IMR-90 (cell line): ENCODE measurements at regions of chr10 and their contacts with region 1.

Region 1: GRCh38 chr10:118423800-118424479 is 81.8 kb upstream of the FAM204A start:
- DNase-seq: peak; percentile 81
- ATAC-seq: peak; percentile 96
- H3K4me3 ChIP-seq: no peak overlapping the region
- H3K27ac ChIP-seq: no peak overlapping the region
- H3K4me1 ChIP-seq: no peaks in the 10 kb centered on the region
- H3K27me3 ChIP-seq: no peaks in the 10 kb centered on the region
- CTCF ChIP-seq: peak; percentile 78
- POLR2A ChIP-seq: no peak
- RAD21 ChIP-seq: peak; percentile 68

Region 2: GRCh38 chr10:118341791-118342637 is 81.9 kb before region 1 on chr10 and contains the start of gene FAM204A:
- CTCF ChIA-PET with region 1: no interaction called
- POLR2A ChIA-PET with region 1: no interaction called
- dilution Hi-C with region 1: no loop called
- in situ Hi-C with region 1: no loop called
- intact Hi-C with region 1: loop called (anchors 1 kb)
- DNase-seq: peak; percentile 90
- ATAC-seq: peak; percentile 99
- H3K4me3 ChIP-seq: peak within 1 kb of the TSS; percentile 90
- H3K27ac ChIP-seq: peak within 1 kb of the TSS; percentile 57
- H3K4me1 ChIP-seq: no peaks in the 10 kb centered on the region
- H3K27me3 ChIP-seq: no peaks in the 10 kb centered on the region
- CTCF ChIP-seq: no peak
- POLR2A ChIP-seq: peak; percentile 56
- RAD21 ChIP-seq: no peak
- total RNA-seq, gene FAM204A: 50.5 and 54.3 TPM in 2 replicates